Aorta (tissue), 5 donors: ENCODE measurements at regions of chr7 and their contacts with region 1.

Region 1: GRCh38 chr7:114062810-114063209 is 144.0 kb upstream of the PPP1R3A start:
- DNase-seq: no peak
- ATAC-seq: no peak
- H3K4me3 ChIP-seq: no peak overlapping the region
- H3K27ac ChIP-seq: no peak overlapping the region
- H3K4me1 ChIP-seq: no peaks in the 10 kb centered on the region
- H3K27me3 ChIP-seq: no peaks in the 10 kb centered on the region

Region 2: DNA sequence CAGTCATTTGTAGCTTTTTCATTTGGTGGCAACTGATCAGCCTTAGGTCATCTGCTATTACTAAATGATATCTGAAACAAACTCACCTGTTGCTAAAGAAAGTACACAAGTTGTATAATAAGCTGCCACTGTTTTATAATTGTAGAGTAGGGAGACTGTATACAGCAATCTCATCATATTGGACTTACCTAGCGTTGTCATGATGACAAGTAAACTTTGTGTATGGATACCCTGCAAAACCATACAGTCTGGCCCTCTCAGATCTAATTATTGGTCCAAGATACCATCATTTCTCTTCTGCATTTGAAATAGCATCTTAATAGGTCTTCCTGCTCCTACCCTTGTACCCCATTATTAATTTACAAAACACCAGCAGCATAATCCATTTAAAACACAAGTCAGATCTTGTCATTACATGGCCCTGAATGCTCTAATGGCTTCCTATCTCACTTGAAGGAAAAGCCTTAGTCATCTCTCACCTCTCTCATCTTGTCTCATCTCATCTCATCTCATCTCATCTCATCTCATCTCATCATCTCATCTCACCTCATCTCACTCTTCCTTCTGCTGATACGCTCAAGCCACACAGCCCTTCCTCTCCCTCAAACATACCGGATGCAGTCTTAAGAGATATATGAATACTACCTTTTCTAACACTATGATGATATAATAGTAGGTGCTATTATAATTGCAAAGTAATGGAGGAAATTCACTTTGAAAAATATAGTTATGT is 1399.7 kb after region 1 on chr7:
- intact Hi-C with region 1: loop called in 1 of 2 experiments (anchors 10 kb)
- DNase-seq: no peak
- ATAC-seq: no peak
- H3K4me3 ChIP-seq: no peak overlapping the region
- H3K27ac ChIP-seq: no peak overlapping the region
- H3K4me1 ChIP-seq: no peaks in the 10 kb centered on the region
- H3K27me3 ChIP-seq: no peaks in the 10 kb centered on the region